Left cardiac atrium (tissue), 4 donors: ENCODE measurements at regions of chr1 and their contacts with region 1.

Region 1: GRCh38 chr1:99685516-99686180 is 39.7 kb downstream of the PALMD start:
- DNase-seq: peak; percentile 86
- ATAC-seq: peak; percentile 90 to 94

Region 2: GRCh38 chr1:99544328-99544727 is 141.3 kb before region 1 on chr1:
- intact Hi-C with region 1: loop called in 1 of 2 experiments (anchors 10 kb)
- DNase-seq: no peak
- ATAC-seq: peak in 1 of 2 donors; percentile 37

Region 3: GRCh38 chr1:99599678-99600175 is 85.9 kb before region 1 on chr1:
- intact Hi-C with region 1: no loop called
- DNase-seq: peak; percentile 71
- ATAC-seq: peak; percentile 29 to 92